ENCODE measurements at regions of chr17 and their contacts with region 1.

Region 1: DNA sequence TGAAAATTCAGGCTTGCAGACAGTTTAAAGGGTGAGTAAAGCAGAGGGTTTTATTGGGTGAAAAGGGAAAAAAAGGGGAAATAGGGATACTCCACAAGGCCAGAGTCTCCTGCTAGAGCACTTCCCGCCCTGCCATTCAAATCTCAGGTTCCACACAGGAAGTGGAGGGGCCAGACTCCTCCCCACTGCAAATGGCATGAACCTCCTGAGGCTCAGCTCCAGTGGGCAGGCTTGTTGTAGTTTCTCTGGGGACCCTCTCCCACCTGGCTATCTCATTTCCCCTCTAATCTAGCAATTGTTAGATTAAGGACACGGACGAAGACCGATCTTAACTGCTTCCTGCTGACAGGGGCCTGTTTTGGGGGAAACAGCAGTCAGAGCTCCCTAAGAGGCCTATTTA is 43.4 kb downstream of the TAOK1 start:
- DNase-seq: peak in 1 of 35 experiments; percentile 1
- ATAC-seq: no peak
- H3K4me3 ChIP-seq: no peak overlapping the region
- H3K4me3 Mint-ChIP-seq: no peak overlapping the region
- H3K27ac ChIP-seq: no peak overlapping the region
- H3K27ac Mint-ChIP-seq: peak overlapping the region in 1 of 2 donors; percentile 50
- H3K4me1 ChIP-seq: peaks cover 4 to 12% of the 10 kb centered on the region in 2 experiments
- H3K4me1 Mint-ChIP-seq: peaks cover 11 to 47% (median 36%) of the 10 kb centered on the region in 3 donors
- H3K27me3 ChIP-seq: no peaks in the 10 kb centered on the region
- H3K27me3 Mint-ChIP-seq: no peaks in the 10 kb centered on the region

Region 2: GRCh38 chr17:28834420-28834819 is 599.1 kb before region 1 on chr17:
- CTCF ChIA-PET with region 1: interaction called in 1 of 2 experiments, 12 read pairs
- POLR2A ChIA-PET with region 1: no interaction called
- DNase-seq: no peak
- ATAC-seq: no peak
- H3K4me3 ChIP-seq: no peak overlapping the region
- H3K4me3 Mint-ChIP-seq: no peak overlapping the region
- H3K27ac ChIP-seq: no peak overlapping the region
- H3K27ac Mint-ChIP-seq: no peak overlapping the region
- H3K4me1 ChIP-seq: peaks cover 0 to 3% of the 10 kb centered on the region in 2 experiments
- H3K4me1 Mint-ChIP-seq: peaks cover 9 to 22% (median 20%) of the 10 kb centered on the region in 3 donors
- H3K27me3 ChIP-seq: no peaks in the 10 kb centered on the region
- H3K27me3 Mint-ChIP-seq: no peaks in the 10 kb centered on the region

Region 3: DNA sequence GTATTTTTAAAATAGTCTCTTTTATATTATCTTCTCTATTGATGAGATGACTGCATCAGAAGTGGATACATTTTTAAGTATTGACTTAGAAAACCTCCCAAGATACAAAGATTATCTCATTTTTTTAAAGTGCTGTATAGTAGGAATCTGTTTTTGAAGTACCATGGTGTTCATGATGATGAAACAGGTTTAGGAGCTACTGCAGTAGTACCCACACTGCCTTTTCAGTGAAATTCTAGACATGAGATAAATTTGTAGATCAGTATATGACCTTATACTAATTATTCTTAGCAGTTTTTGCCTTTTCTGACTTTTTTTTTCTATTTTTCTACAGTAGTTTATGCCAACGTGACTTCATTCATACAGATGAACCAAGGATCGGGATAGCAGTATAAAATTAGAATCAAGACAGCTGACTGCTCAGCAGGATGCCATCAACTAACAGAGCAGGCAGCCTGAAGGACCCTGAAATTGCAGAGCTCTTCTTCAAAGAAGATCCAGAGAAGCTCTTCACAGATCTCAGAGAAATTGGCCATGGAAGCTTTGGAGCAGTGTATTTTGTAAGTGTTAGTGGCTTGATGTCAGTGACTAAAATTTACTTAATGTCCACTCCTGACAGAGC is 17.7 kb after region 1 on chr17:
- CTCF ChIA-PET with region 1: no interaction called
- POLR2A ChIA-PET with region 1: no interaction called
- DNase-seq: no peak
- ATAC-seq: no peak
- H3K4me3 ChIP-seq: no peak overlapping the region
- H3K4me3 Mint-ChIP-seq: no peak overlapping the region
- H3K27ac ChIP-seq: no peak overlapping the region
- H3K27ac Mint-ChIP-seq: peak overlapping the region in 1 of 2 donors; percentile 59
- H3K4me1 ChIP-seq: peaks cover 5 to 10% of the 10 kb centered on the region in 2 experiments
- H3K4me1 Mint-ChIP-seq: peaks cover 40 to 47% (median 45%) of the 10 kb centered on the region in 3 donors
- H3K27me3 ChIP-seq: no peaks in the 10 kb centered on the region
- H3K27me3 Mint-ChIP-seq: no peaks in the 10 kb centered on the region

Measured in T-cell (primary cell).